Stomach (tissue), 19 donors: ENCODE measurements at regions of chr9 and their contacts with region 1.

Region 1: GRCh38 chr9:97928986-97929604 is 6.8 kb upstream of the TRMO start:
- DNase-seq: no peak
- H3K4me3 ChIP-seq: no peak overlapping the region
- H3K27ac ChIP-seq: no peak overlapping the region
- H3K4me1 ChIP-seq: peaks cover 0 to 2% (median under 1%) of the 10 kb centered on the region in 4 donors
- H3K27me3 ChIP-seq: peaks cover 0 to 42% (median 0%) of the 10 kb centered on the region in 3 donors
- CTCF ChIP-seq: no peak
- EP300 ChIP-seq: no peak
- POLR2A ChIP-seq: no peak

Region 2: DNA sequence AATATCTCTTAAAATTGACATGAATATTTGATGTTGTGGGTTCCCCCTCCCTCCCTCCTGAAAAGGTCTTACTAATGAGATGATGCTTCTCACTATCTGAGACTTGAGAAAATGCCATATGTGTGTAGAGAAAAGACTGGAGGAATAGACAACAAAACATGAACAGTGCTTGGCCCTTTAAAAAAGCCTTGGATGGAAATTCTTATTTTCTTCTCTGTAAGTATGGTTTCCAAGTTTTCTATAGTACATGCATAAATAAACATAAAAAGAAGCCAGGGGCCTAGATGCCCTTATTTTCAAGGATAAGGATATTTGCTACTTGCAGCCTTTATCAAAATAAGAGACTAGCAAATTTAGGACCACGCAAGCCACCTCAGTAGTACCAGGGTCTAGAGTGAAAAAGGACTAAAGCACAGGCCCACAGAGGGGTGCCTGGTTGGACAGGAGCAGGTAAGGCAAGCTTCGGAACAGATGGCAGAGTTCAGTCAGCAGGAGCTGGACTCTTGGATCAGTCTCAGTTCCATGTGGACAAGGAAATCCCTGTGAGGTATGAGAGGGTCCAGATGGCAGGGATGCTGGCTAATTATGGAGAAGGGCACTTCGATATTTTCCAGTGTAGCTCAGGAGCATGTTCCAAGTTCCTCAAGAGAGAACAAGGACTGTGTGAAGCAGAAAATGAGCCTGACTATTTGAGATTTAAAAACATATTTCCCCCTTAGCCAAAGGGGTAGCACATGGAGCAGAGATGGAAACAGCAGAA is 49.5 kb after region 1 on chr9:
- intact Hi-C with region 1: loop called (anchors 5 kb)
- DNase-seq: no peak
- H3K4me3 ChIP-seq: no peak overlapping the region
- H3K27ac ChIP-seq: no peak overlapping the region
- H3K4me1 ChIP-seq: peaks cover 0 to 22% (median 16%) of the 10 kb centered on the region in 4 donors
- H3K27me3 ChIP-seq: no peaks in the 10 kb centered on the region
- CTCF ChIP-seq: no peak
- EP300 ChIP-seq: no peak
- POLR2A ChIP-seq: no peak

Region 3: GRCh38 chr9:97990266-97990665 is 61.2 kb after region 1 on chr9:
- intact Hi-C with region 1: no loop called
- DNase-seq: no peak
- H3K4me3 ChIP-seq: no peak overlapping the region
- H3K27ac ChIP-seq: peak overlapping the region in 2 of 5 donors; percentile 8 to 23
- H3K4me1 ChIP-seq: peaks cover 28 to 95% (median 78%) of the 10 kb centered on the region in 4 donors
- H3K27me3 ChIP-seq: no peaks in the 10 kb centered on the region
- CTCF ChIP-seq: no peak
- EP300 ChIP-seq: no peak
- POLR2A ChIP-seq: no peak

Region 4: DNA sequence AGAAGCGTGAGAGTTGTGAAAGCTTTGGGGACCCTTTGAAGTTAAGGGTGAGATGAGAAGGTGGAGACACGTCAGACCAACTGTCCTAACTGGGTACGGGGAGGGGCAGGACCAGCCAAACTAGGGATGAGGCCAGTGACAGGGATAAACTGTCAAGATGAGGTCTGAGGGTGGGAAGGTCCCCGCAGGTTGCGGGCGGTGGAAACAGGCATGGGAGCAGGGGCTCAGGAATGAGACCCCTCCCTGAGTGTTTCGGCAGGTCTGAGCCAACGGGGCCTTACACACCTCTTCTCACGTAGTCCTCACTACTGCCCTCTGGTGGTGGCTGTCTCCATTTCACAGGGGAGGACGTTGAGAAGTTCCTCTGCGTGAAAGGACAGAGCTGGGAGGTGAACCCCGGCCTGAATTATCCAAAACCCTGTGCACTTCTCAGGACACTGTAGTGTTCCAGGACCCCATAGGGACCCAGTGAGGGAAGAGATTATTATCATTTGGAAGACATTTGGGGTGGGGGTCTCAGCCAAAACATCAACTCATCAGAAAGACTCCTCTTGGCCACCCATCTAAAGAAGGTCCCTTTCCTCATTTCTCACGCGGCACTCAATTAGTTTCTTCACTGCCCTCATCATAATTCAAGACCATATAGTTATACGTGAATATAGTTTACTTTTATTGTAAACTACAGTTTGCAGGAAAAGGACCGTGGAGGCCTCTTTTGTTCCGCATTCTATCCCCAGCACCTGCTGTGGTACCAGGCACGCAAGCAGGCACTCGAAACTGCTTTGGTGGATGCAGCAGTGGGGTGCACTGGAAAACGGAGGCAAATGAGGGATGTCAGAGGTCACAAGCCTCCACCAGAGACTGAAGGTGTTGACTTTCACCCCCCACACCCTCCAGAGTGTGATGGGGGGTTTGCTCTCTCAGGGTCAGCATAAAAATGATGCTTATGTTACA is 105.8 kb after region 1 on chr9:
- intact Hi-C with region 1: loop called (anchors 5 kb)
- DNase-seq: peak; percentile 93
- H3K4me3 ChIP-seq: peak overlapping the region in 1 of 4 donors; percentile 4
- H3K27ac ChIP-seq: no peak overlapping the region
- H3K4me1 ChIP-seq: peaks cover 0 to 9% (median 3%) of the 10 kb centered on the region in 4 donors
- H3K27me3 ChIP-seq: peaks cover 0 to 2% (median 0%) of the 10 kb centered on the region in 3 donors
- CTCF ChIP-seq: peak in 5 of 7 experiments; percentile 67 to 87 (median 76)
- EP300 ChIP-seq: no peak
- POLR2A ChIP-seq: no peak